Heart right ventricle (tissue), 16 donors: ENCODE measurements at regions of chr16 and their contacts with region 1.

Region 1: DNA sequence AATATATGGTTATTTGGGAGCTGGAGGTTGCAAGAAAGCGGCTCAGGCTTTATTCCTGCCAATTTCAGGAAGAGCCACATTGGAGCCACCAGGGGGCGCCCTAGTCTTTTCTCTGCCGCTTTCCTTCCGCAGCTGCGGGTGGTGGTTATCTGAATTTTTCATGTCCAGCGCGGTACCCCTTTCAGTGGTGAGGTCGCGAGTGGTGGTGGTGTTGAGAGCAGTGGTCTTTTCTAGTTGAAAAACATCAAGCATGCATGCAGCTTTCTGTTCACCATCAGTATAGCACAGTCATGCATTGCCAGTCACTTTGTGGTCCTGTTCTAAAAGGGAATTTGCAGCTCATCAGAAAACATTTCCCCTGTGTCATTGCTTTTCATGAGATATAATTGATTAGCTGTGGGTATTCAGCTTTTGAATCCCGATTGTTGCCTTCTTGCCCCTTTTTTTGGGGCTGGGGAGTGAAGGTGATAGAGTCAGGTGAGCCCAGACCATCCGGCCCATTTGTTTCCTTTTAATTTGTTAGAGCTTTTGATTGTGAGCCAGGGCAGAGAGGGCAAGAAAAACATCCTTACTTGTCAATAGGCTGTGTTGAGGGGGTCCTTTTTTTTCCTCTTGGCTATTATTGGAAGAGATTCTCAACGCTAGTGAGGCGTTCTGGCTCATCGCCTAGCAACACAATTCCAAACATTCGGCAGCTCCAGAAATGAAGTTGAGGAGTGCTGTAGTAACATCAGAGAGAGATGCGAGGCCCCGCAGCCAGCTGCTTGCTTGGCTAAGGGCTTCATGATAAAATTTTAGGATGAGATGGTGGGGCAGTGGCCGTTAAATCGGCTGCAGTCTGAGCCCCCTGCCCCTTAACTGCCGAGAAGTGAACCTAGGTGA is 119.0 kb downstream of the SNX29 start:
- DNase-seq: peak; percentile 65 to 69
- ATAC-seq: peak; percentile 40 to 73 (median 56)
- H3K4me3 ChIP-seq: peak overlapping the region in 7 of 10 donors; percentile 2 to 46 (median 33)
- H3K27ac ChIP-seq: peak overlapping the region in 3 of 10 donors; percentile 23 to 66 (median 29)
- H3K4me1 ChIP-seq: peaks cover 23 to 54% (median 43%) of the 10 kb centered on the region in 9 donors
- H3K27me3 ChIP-seq: no peaks in the 10 kb centered on the region
- CTCF ChIP-seq: peak in 8 of 9 donors; percentile 79 to 94 (median 94)

Region 2: DNA sequence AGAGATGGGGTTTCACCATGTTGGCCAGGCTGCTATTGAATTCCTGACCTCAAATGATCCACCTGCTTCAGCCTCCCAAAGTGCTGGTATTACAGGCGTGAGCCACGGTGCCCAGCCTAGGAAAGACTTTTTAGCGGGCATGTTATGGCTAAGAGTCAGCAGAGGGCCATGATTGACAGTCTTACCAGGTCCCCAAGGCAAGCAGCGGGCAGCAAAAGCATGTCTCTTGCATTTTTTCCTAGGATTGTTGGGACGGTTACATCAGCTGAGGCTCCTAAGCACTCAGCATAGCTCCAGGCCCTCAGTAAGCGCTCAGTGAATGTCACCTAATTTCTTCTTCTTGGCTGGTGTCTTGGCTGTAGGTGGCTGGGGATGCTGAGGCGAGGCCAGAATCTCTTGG is 41.4 kb after region 1 on chr16:
- intact Hi-C with region 1: loop called in 2 of 10 experiments (anchors 5 to 10 kb)
- DNase-seq: no peak
- ATAC-seq: peak in 1 of 8 donors; percentile 4
- H3K4me3 ChIP-seq: no peak overlapping the region
- H3K27ac ChIP-seq: no peak overlapping the region
- H3K4me1 ChIP-seq: peaks cover 0 to 25% (median 14%) of the 10 kb centered on the region in 9 donors
- H3K27me3 ChIP-seq: no peaks in the 10 kb centered on the region
- CTCF ChIP-seq: no peak

Region 3: DNA sequence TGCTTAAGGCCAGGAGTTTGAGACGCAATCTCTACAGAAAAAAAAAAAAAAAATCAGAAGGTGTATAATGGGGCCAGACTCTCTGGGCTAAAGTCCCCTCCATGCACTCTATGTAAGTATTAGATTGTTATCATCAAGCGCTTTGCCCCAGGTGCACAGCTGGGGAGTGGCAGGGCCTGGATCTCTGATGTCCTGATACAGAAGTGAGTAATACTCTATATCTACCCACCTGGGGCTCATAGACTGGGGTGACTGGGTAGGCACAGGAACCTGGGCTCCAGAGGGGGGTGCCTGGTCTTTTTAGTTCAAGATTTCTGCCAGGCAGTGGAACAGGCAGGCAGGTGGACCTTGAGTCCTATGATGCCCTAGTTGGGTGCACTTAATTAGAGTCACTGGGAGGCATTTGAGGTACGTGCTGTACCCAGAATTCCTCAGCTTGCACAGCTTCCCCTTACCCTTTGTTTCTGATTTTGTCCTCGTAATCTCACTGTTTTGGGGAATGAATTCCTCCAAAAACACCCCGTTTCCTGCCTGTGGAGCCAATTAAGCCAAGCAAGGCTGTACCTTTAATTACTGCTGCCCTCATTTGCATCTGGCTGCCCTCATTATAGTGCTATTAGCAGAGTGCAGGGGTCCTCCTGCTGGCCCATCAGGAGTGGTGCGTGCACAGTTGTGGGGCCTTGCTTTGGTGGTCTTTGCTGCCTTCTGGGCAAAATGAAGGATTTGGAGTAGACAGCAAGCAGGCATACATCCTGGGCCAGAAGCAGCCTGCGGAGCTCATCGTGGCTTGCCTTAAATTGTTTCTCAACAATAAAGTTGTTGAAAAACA is 120.0 kb after region 1 on chr16:
- intact Hi-C with region 1: loop called in 7 of 10 experiments (anchors 2 to 10 kb)
- DNase-seq: no peak
- ATAC-seq: peak in 3 of 8 donors; percentile 45 to 49 (median 46)
- H3K4me3 ChIP-seq: no peak overlapping the region
- H3K27ac ChIP-seq: no peak overlapping the region
- H3K4me1 ChIP-seq: no peaks in the 10 kb centered on the region
- H3K27me3 ChIP-seq: no peaks in the 10 kb centered on the region
- CTCF ChIP-seq: peak in 6 of 9 donors; percentile 12 to 44 (median 28)

Region 4: DNA sequence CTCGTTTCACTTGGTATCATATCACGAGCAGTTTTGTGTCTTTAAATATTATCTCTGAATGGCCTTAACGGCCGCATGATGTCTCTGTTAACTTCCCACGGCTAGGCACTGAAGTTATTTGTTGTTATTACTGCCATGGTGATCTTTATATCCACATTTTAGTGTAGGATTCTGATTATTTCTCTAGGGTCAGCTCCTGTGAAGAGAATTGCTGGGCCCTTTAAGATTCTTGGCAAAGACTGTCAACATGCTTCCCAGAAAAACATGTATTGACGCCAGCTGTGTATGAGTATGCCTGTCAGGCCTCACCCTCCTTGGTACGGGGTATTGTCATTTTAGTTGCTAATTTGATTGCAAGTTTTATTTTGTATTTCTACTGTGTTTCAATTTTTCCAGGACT is 144.5 kb after region 1 on chr16:
- intact Hi-C with region 1: loop called in 1 of 10 experiments (anchors 10 kb)
- DNase-seq: no peak
- ATAC-seq: peak; percentile 65 to 86 (median 80)
- H3K4me3 ChIP-seq: no peak overlapping the region
- H3K27ac ChIP-seq: peak overlapping the region in 4 of 10 donors; percentile 1 to 32 (median 22)
- H3K4me1 ChIP-seq: peaks cover 0 to 25% (median 18%) of the 10 kb centered on the region in 9 donors
- H3K27me3 ChIP-seq: no peaks in the 10 kb centered on the region
- CTCF ChIP-seq: no peak

Region 5: GRCh38 chr16:12271006-12271405 is 175.5 kb after region 1 on chr16:
- intact Hi-C with region 1: loop called in 2 of 10 experiments (anchors 10 kb)
- DNase-seq: no peak
- ATAC-seq: peak in 5 of 8 donors; percentile 35 to 65 (median 60)
- H3K4me3 ChIP-seq: no peak overlapping the region
- H3K27ac ChIP-seq: no peak overlapping the region
- H3K4me1 ChIP-seq: no peaks in the 10 kb centered on the region
- H3K27me3 ChIP-seq: no peaks in the 10 kb centered on the region
- CTCF ChIP-seq: peak in 6 of 9 donors; percentile 18 to 39 (median 32)

Region 6: GRCh38 chr16:12340151-12340733 is 244.7 kb after region 1 on chr16:
- intact Hi-C with region 1: loop called in 4 of 10 experiments (anchors 5 to 10 kb)
- DNase-seq: no peak
- ATAC-seq: no peak
- H3K4me3 ChIP-seq: no peak overlapping the region
- H3K27ac ChIP-seq: no peak overlapping the region
- H3K4me1 ChIP-seq: peaks cover 0 to 26% (median 13%) of the 10 kb centered on the region in 9 donors
- H3K27me3 ChIP-seq: no peaks in the 10 kb centered on the region
- CTCF ChIP-seq: peak in 6 of 9 donors; percentile 6 to 47 (median 37)